Posterior cingulate gyrus (tissue), 11 donors: ENCODE measurements at regions of chr1 and their contacts with region 1.

Region 1: GRCh38 chr1:198333744-198334143 is 176.9 kb downstream of the NEK7 start:
- DNase-seq: no peak

Region 2: DNA sequence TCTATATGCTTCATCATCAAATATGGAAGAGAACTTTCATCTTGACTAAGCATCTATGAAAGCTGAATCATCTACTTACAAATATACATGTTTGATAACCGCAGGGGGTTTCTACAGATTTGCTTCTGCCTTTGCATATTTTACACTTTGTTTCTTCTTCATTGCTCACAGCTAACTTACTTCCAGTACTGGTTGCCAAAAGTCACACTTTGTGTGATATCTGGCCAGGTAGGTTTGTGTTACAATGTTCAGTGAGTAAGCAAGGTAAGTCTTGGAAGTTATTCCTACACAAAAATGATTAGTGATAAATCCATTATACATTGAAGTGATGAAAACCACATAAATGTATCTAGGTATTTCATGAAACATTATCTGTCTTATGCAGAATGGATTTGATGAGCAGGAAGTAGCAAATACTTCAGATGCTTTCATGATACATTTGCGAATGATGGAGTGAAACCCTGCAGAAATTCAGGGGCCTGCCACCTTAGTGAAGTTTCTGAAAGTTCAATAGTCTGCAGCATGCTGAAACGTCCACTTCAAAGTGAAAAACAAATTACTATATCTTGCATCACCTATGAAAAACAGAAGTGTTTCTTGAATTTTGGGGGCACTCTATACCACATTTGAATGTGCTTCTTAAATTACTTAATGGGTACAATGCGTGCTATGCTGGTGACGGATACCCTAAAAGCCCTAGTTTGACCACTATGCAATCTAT is 19.4 kb after region 1 on chr1:
- intact Hi-C with region 1: loop called (anchors 1 kb)
- DNase-seq: no peak

Region 3: DNA sequence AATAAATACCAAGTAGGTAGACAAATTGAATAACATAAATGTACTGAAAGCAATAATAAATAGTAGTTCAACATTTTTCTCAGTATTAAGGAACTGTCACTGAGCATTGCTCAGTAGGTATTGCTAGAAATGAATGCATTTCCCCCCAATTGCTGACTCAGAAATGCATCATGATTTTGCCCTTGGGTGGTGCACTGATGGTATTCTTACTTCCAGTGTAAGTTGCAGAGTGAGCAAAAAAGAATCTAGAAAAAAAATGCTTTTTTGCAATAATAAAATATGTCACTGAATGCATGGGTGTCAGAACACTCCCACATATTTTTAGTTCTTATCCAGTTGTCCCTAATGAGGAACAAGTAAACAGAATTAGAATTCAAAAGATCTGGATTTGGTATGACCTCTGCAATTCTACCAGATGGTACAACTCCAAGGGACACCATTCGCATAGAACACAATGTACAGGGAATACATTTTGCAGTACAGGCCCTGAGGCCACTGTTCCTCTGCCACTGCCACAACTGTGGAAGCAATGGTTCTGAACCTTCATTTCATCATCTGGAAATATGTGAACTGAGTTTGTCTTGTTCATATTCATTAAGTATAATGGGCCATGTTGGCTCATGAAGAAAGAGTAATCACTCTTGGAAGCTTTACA is 128.7 kb after region 1 on chr1:
- intact Hi-C with region 1: no loop called
- DNase-seq: no peak